ENCODE measurements at regions of chr2 and their contacts with region 1.

Region 1: DNA sequence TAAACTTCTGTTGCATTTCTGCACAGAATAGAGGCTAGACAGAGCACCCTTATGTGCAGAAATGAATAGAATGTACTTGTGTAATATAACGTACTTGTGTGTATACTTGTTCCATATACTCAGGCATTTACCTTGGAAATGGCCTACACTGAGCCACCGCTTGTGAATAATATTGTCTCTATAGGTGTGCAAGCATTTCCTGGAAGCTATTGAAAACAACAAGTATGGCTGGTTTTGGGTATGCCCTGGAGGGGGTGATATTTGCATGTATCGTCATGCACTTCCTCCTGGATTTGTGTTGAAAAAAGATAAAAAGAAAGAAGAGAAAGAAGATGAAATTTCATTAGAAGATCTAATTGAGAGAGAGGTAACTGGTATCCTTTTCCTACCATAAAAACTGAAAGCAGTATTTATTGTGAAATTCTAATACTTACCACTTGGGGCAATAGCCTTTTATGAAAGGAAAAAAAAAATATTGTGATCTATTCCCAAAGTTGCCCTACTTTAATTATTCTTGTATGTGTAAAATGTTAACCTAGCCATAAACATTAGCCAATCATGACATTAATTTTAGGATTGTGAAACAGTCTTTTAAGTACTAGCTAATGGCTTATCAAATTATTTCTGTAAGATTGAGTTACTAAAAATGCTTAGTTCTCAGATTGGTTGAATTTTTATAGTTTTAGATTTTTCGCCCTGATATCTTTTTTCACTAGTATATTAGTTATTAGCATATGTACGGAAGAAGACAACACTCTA is 18.0 kb downstream of the ZC3H15 start:
- DNase-seq: peak in 2 of 9 experiments; percentile 23 to 48
- ATAC-seq: peak; percentile 79
- H3K4me3 ChIP-seq: no peak overlapping the region
- H3K4me3 Mint-ChIP-seq: no peak overlapping the region
- H3K27ac ChIP-seq: no peak overlapping the region
- H3K27ac Mint-ChIP-seq: no peak overlapping the region
- H3K4me1 ChIP-seq: no peaks in the 10 kb centered on the region
- H3K4me1 Mint-ChIP-seq: peaks cover 10% of the 10 kb centered on the region
- H3K27me3 ChIP-seq: no peaks in the 10 kb centered on the region
- H3K27me3 Mint-ChIP-seq: no peaks in the 10 kb centered on the region
- CTCF ChIP-seq: peak; percentile 77

Region 2: DNA sequence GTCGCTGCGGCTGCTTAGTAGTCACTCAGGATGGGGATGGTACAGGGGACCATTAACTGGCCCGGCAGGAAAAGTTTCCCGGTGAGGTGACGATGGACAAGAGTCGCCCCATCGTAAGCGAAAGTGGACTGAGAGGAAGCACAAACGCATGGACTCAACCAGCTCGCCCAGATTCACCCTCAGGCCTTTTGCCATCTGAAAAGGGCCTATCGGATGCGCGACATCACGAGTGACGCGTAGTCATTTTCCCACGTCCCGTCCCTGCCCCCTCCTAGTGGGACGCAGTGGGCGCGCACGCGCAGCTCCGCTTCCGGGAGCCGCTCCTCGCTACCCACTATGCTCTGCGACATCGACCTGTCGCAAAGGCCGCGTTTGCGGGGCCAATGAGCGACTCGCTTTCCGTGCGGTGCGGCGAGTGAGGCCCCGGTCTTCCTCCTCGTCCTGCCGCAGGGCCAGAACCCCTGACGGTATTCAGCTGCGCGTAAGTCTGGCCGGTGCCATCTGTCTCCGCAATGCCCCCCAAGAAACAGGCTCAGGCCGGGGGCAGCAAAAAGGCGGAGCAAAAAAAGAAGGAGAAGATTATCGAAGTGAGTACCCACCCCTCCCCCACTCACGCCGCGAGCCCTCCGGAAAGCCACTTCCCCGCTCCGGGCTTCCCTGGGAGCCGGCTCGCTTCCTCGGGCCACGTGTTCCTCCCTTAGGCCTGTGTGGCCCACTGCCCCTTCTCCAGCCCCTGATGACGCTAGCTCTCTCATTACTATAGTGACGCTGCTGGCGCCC is 18.0 kb before region 1 on chr2 and contains the start of gene ZC3H15:
- CTCF ChIA-PET with region 1: interaction called, 5 read pairs
- POLR2A ChIA-PET with region 1: interaction called, 3 read pairs
- intact Hi-C with region 1: loop called in 1 of 2 experiments (anchors 2 kb)
- DNase-seq: peak; percentile 93 to 99 (median 96)
- ATAC-seq: peak; percentile 91
- H3K4me3 ChIP-seq: peak within 1 kb of the TSS; percentile 81 to 92
- H3K4me3 Mint-ChIP-seq: peak within 1 kb of the TSS; percentile 98
- H3K27ac ChIP-seq: peak within 1 kb of the TSS; percentile 95 to 96
- H3K27ac Mint-ChIP-seq: peak within 1 kb of the TSS; percentile 100
- H3K4me1 ChIP-seq: peaks cover 43% of the 10 kb centered on the region
- H3K4me1 Mint-ChIP-seq: peaks cover 69% of the 10 kb centered on the region
- H3K27me3 ChIP-seq: no peaks in the 10 kb centered on the region
- H3K27me3 Mint-ChIP-seq: no peaks in the 10 kb centered on the region
- CTCF ChIP-seq: no peak
- total RNA-seq, gene ZC3H15: 146 to 151 TPM

Region 3: DNA sequence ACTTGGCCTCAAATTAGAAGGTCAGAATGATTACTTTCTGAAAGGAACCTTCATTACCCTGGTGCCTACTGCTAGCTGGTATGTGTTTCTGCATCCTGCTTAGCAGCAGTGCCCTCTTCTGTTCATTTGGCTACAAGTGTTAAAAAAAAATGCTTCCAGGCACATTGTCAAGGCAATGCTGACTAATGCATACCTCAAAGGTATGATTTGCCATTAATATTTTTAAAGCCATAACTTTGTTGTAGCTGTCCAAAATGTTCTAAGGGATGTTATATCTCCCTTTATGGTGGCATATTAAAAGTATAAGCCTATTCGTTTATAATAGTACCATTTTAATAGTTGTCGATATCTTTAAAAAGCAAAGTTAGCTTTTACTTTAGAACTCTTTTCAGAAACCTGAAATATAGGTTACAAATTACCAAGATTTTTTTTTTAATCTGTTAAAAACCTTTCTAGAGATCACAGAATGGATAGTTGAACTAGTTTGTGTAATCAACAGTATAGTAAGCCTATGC is 137.8 kb after region 1 on chr2:
- CTCF ChIA-PET with region 1: interaction called, 71 read pairs
- POLR2A ChIA-PET with region 1: interaction called, 5 read pairs
- intact Hi-C with region 1: loop called (anchors 1 kb)
- DNase-seq: peak in 6 of 9 experiments; percentile 9 to 62 (median 17)
- ATAC-seq: peak; percentile 73
- H3K4me3 ChIP-seq: no peak overlapping the region
- H3K4me3 Mint-ChIP-seq: no peak overlapping the region
- H3K27ac ChIP-seq: no peak overlapping the region
- H3K27ac Mint-ChIP-seq: no peak overlapping the region
- H3K4me1 ChIP-seq: no peaks in the 10 kb centered on the region
- H3K4me1 Mint-ChIP-seq: peaks cover 1% of the 10 kb centered on the region
- H3K27me3 ChIP-seq: no peaks in the 10 kb centered on the region
- H3K27me3 Mint-ChIP-seq: no peaks in the 10 kb centered on the region
- CTCF ChIP-seq: peak; percentile 59

Region 4: DNA sequence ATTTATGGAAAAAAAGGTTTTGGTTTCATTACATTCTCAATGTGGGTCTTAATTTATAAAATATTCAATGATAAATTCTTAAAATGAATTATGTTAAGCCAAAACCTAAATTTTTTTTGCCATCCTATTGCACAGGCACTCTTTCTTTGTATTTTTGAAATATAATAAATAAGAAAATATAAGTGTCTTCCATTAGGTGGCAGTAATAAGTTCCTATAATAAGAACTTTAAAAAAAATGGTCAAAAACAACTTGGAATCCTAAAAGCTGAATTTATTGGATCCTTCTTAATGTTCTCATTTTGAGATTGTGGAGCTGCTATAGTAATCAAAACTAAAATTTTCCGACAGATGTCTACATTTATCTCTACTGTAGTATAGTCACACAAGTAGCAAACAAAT is 938.4 kb after region 1 on chr2:
- CTCF ChIA-PET with region 1: no interaction called
- POLR2A ChIA-PET with region 1: no interaction called
- intact Hi-C with region 1: loop called in 1 of 2 experiments (anchors 10 kb)
- DNase-seq: no peak
- ATAC-seq: no peak
- H3K4me3 ChIP-seq: no peak overlapping the region
- H3K4me3 Mint-ChIP-seq: no peak overlapping the region
- H3K27ac ChIP-seq: no peak overlapping the region
- H3K27ac Mint-ChIP-seq: no peak overlapping the region
- H3K4me1 ChIP-seq: peaks cover under 1% of the 10 kb centered on the region
- H3K4me1 Mint-ChIP-seq: peaks cover 3% of the 10 kb centered on the region
- H3K27me3 ChIP-seq: no peaks in the 10 kb centered on the region
- H3K27me3 Mint-ChIP-seq: no peaks in the 10 kb centered on the region
- CTCF ChIP-seq: no peak

Measured in CD8-positive, alpha-beta T cell (primary cell).